PC-3 (cell line): ENCODE measurements at regions of chr20 and their contacts with region 1.

Region 1: DNA sequence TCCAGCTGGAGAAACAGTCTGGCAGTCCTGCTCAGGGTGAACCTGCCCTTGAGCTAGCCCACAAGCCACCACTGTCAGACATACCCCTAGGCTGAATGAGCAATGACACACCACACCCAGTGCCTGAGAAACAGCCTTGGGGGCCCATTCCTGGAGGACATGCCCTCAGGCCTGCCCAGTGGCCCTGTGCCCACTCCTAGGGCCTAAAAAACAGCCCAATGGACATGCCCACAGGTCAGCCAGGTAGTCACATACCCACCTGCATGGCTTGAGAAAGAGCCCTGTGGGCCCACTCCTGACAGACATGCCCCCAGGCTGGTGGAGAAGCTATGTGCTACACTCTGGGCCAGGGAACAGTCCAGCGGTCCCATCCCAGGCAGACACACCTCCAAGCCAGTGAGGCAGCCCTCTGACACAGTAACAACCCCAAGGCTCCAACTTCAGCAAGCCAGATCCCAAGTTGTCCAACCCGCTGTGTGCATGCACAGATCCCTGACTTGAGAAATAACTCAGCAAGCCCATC is 491.2 kb downstream of the KIF16B start:
- DNase-seq: no peak
- ATAC-seq: no peak
- H3K4me3 ChIP-seq: no peak overlapping the region
- H3K27ac ChIP-seq: no peak overlapping the region
- H3K4me1 ChIP-seq: no peaks in the 10 kb centered on the region
- H3K27me3 ChIP-seq: no peaks in the 10 kb centered on the region
- CTCF ChIP-seq: no peak

Region 2: GRCh38 chr20:16257021-16257420 is 174.9 kb after region 1 on chr20:
- CTCF ChIA-PET with region 1: no interaction called
- POLR2A ChIA-PET with region 1: no interaction called
- intact Hi-C with region 1: no loop called
- DNase-seq: no peak
- ATAC-seq: no peak
- H3K4me3 ChIP-seq: no peak overlapping the region
- H3K27ac ChIP-seq: no peak overlapping the region
- H3K4me1 ChIP-seq: peaks cover 13% of the 10 kb centered on the region
- H3K27me3 ChIP-seq: no peaks in the 10 kb centered on the region
- CTCF ChIP-seq: no peak

Region 3: GRCh38 chr20:17495826-17496225 is 1413.7 kb after region 1 on chr20:
- CTCF ChIA-PET with region 1: no interaction called
- POLR2A ChIA-PET with region 1: interaction called, 40 read pairs
- intact Hi-C with region 1: no loop called
- DNase-seq: no peak
- ATAC-seq: no peak
- H3K4me3 ChIP-seq: no peak overlapping the region
- H3K27ac ChIP-seq: no peak overlapping the region
- H3K4me1 ChIP-seq: no peaks in the 10 kb centered on the region
- H3K27me3 ChIP-seq: peaks cover 9% of the 10 kb centered on the region; the same call in 1 of the 2 replicates
- CTCF ChIP-seq: no peak